ENCODE measurements at regions of chr2 and their contacts with region 1.

Region 1: GRCh38 chr2:203453858-203454451 is 81.1 kb downstream of the RAPH1 start:
- DNase-seq: peak; percentile 65
- H3K4me3 ChIP-seq: no peak overlapping the region
- H3K27ac ChIP-seq: no peak overlapping the region
- H3K4me1 ChIP-seq: no peaks in the 10 kb centered on the region
- H3K27me3 ChIP-seq: no peaks in the 10 kb centered on the region
- CTCF ChIP-seq: peak; percentile 76

Region 2: DNA sequence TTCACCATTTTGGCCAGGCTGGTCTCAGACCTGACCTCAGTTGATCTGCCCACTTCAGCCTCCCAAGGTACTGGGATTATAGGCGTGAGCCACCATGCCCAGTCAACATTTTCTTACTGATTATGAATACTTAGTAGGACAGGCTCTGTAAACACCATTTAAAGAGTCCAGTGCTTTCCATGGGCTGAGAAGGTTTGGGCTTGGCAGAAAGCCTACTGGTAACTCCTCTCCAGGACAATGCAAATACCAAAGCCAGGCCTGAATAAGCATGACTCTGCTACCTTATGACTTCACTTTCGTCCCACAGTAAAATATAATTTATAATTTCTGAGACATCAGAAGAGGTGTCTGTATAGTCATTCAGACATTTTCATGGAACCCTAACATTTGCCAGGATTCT is 879.4 kb before region 1 on chr2:
- CTCF ChIA-PET with region 1: no interaction called
- POLR2A ChIA-PET with region 1: no interaction called
- intact Hi-C with region 1: loop called (anchors 5 kb)
- DNase-seq: no peak
- H3K4me3 ChIP-seq: no peak overlapping the region
- H3K27ac ChIP-seq: no peak overlapping the region
- H3K4me1 ChIP-seq: no peaks in the 10 kb centered on the region
- H3K27me3 ChIP-seq: no peaks in the 10 kb centered on the region
- CTCF ChIP-seq: no peak

Region 3: DNA sequence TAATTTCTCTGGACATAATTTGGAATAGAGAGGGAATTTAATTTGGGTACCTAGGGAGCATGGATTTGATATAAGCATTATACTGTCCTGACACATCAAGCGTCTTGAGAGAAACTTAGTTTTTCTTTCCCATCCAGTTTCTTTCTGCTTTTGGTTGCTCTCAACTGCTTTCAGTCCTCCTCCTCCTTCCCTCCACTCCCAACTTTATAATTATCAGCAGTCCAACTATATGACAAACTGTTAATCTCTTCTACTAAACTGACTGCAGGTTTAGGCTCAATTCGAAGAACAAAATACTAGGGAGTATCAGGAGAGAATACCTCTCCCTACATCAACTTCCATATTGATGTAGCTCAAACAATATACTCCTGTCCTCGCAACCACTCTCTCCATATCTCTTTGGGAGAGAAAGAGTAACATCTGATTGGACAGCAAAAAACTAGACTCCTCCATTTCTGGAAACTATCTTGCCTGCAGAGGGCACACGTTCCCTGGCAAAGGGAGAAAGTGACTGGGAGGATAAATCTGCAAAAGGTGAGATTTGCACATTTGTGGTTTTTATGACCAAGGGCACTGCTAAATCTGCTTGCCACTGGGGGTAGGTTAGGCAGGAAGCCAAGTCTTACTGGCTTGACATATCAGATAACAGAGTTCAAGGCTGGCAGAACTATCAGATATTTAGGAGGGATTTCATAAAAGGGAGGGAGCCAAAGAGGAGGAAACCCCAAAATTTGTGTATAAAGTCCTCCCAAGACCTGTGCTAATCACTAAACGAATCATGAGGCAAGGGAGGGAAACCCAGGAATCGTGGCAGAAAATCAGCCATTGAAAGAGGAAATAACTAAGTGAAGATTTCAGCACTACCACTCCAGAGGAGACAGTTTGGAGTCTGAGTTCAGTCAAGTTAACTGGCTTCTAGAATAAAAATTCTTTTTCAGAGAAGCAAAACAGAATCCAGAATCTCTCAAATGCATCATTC is 622.4 kb before region 1 on chr2:
- CTCF ChIA-PET with region 1: no interaction called
- POLR2A ChIA-PET with region 1: no interaction called
- intact Hi-C with region 1: loop called (anchors 2 kb)
- DNase-seq: peak; percentile 84
- H3K4me3 ChIP-seq: no peak overlapping the region
- H3K27ac ChIP-seq: no peak overlapping the region
- H3K4me1 ChIP-seq: no peaks in the 10 kb centered on the region
- H3K27me3 ChIP-seq: no peaks in the 10 kb centered on the region
- CTCF ChIP-seq: peak; percentile 81

Region 4: DNA sequence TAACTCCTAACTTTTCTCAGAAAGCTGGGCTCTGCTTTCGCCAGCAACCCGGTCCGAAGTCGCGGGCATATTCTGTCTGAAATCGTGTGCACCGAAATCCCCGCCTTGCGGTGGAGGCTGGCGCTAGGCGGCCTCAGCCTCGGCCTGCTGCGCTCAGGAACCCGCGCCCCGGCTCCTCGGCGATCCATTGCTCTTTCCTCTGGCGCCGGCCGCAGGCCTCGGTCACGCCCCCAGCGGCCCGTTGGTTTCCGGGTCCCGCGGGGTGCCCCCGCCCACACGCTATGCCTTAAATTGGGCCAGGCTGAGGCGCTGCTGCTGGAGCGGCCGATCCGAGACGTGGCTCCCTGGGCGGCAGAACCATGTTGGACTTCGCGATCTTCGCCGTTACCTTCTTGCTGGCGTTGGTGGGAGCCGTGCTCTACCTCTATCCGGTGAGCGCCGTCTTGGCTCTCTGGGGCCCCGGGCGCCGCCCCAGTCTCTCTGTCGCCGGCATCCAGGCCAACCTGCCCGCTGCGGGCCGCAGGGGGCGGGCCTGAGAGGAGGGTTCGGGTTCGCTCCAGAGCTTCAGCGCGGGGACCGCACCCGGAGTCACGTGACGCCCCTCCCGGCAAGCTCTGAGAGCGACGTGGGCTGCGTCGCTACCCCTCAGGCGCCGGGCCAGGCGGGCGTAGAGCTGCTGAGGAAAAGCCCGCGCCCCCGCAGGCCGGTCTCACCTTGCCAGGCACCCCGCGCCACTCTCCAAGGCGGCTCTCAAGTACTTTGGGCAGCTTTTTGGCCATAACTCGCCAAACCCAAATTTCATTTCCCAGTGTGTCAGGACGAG is 215.0 kb before region 1 on chr2 and contains the start of gene CYP20A1:
- CTCF ChIA-PET with region 1: no interaction called
- POLR2A ChIA-PET with region 1: interaction called, 3 read pairs
- intact Hi-C with region 1: loop called (anchors 1 kb)
- DNase-seq: peak; percentile 97
- H3K4me3 ChIP-seq: peak within 1 kb of the TSS; percentile 78
- H3K27ac ChIP-seq: peak within 1 kb of the TSS; percentile 97
- H3K4me1 ChIP-seq: peaks cover 16% of the 10 kb centered on the region
- H3K27me3 ChIP-seq: no peaks in the 10 kb centered on the region
- CTCF ChIP-seq: no peak; the same call in 1 of the 2 replicates
- total RNA-seq, gene CYP20A1: 13.2 and 17.1 TPM in 2 replicates

Region 5: DNA sequence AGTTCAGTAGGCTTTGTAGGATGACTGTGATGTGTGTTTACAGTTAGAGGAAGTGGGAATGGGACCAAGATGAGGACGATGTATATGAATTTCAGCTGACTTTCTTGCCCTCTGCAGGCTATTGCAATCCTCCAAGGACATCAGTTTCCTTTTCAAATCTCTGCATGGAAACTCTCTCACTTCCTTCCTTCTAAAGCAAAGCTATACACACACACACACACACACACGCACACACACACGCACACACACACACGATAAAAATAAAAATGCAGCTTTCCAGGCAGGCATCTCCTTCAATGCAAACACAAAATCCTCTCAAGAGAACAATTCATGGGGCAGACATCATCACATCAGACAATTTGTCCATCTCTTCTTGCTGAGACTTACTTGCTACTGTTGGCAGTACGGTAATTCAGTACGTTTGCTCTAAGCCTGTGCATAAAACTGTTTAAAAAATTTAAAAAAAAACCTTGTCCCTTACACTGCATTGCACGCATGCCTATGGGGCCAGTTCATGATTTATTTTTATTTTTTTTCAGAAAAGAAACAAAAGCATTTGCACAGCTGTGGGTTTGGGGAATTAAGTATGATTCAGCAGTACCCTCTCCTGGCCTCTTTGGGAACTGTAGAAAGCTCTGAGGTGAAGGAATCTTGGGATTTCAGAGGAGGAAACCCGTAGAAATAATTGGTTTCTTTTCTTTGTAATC is 455.5 kb after region 1 on chr2:
- CTCF ChIA-PET with region 1: no interaction called
- POLR2A ChIA-PET with region 1: no interaction called
- intact Hi-C with region 1: loop called (anchors 10 kb)
- DNase-seq: peak; percentile 63
- H3K4me3 ChIP-seq: no peak overlapping the region
- H3K27ac ChIP-seq: no peak overlapping the region
- H3K4me1 ChIP-seq: no peaks in the 10 kb centered on the region
- H3K27me3 ChIP-seq: no peaks in the 10 kb centered on the region
- CTCF ChIP-seq: peak; percentile 82